Posterior vena cava (tissue), 2 donors: ENCODE measurements at regions of chr9 and their contacts with region 1.

Region 1: DNA sequence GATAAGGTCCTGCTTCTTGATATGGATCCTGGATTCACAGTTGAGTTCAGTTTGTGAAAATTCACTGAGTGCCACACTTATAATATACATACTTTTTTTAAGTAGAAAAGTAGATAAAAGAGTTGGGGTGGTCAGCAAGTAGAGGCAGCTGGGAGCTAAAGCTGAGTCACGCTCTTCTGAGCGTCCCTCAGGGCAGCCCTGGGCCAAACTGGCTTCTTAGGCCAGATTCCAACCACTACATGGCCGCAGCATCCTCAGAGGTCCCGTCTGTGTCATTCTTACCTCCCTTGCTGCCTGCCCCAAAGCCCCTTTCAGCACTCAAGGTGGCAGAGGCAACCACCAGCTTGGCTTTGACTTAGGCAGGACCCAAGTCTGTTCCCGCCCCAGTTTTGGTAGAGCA is 123.3 kb upstream of the TBC1D2 start:
- DNase-seq: no peak

Region 2: GRCh38 chr9:98064623-98065392 is 314.0 kb before region 1 on chr9:
- intact Hi-C with region 1: no loop called
- DNase-seq: no peak

Region 3: GRCh38 chr9:98401140-98402018 is 22.6 kb after region 1 on chr9:
- intact Hi-C with region 1: no loop called
- DNase-seq: no peak

Region 4: DNA sequence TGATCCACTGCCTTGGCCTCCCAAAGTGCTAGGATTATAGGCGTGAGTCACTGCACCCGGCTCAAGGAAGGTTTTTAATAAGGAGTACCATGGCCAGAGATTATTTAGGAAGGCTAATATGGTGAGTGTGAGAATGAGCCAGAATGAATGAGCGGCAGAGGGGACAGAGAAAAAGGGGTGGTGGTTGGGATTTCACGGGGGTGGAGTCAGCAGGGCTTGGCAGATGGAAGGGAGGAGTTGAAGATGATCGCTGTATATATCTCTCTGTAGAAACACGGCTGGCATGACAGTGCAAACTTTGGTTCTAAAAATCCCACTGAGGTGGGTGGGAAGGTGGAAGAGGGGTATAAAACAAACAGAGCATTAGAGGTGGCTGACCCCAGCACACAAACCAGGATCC is 53.3 kb after region 1 on chr9:
- intact Hi-C with region 1: loop called in 1 of 2 experiments (anchors 2 kb)
- DNase-seq: no peak